ENCODE measurements at regions of chr13 and their contacts with region 1.

Region 1: GRCh38 chr13:64438084-64438483 is 2792.1 kb downstream of the PCDH9 start:
- DNase-seq: no peak
- ATAC-seq: no peak
- H3K4me3 ChIP-seq: no peak overlapping the region
- H3K4me3 Mint-ChIP-seq: no peak overlapping the region
- H3K27ac ChIP-seq: no peak overlapping the region
- H3K27ac Mint-ChIP-seq: no peak overlapping the region
- H3K4me1 ChIP-seq: no peaks in the 10 kb centered on the region
- H3K4me1 Mint-ChIP-seq: no peaks in the 10 kb centered on the region
- H3K27me3 ChIP-seq: no peaks in the 10 kb centered on the region
- H3K27me3 Mint-ChIP-seq: no peaks in the 10 kb centered on the region

Region 2: GRCh38 chr13:63409791-63410351 is 1028.2 kb before region 1 on chr13:
- CTCF ChIA-PET with region 1: no interaction called
- POLR2A ChIA-PET with region 1: no interaction called
- intact Hi-C with region 1: loop called in 1 of 2 experiments (anchors 10 kb)
- DNase-seq: no peak
- ATAC-seq: no peak
- H3K4me3 ChIP-seq: no peak overlapping the region
- H3K4me3 Mint-ChIP-seq: no peak overlapping the region
- H3K27ac ChIP-seq: no peak overlapping the region
- H3K27ac Mint-ChIP-seq: no peak overlapping the region
- H3K4me1 ChIP-seq: no peaks in the 10 kb centered on the region
- H3K4me1 Mint-ChIP-seq: no peaks in the 10 kb centered on the region
- H3K27me3 ChIP-seq: no peaks in the 10 kb centered on the region
- H3K27me3 Mint-ChIP-seq: no peaks in the 10 kb centered on the region

Measured in naive thymus-derived CD4-positive, alpha-beta T cell (primary cell).